ENCODE measurements at regions of chr20 and their contacts with region 1.

Region 1: GRCh38 chr20:49303065-49303552 is 25.3 kb upstream of the ZNFX1 start:
- DNase-seq: no peak
- ATAC-seq: no peak
- H3K4me3 ChIP-seq: no peak overlapping the region
- H3K27ac ChIP-seq: no peak overlapping the region
- H3K4me1 ChIP-seq: no peaks in the 10 kb centered on the region
- H3K27me3 ChIP-seq: no peaks in the 10 kb centered on the region
- CTCF ChIP-seq: no peak

Region 2: GRCh38 chr20:49228676-49229075 is 74.4 kb before region 1 on chr20:
- intact Hi-C with region 1: loop called in 1 of 2 experiments (anchors 2 kb)
- DNase-seq: no peak
- ATAC-seq: no peak
- H3K4me3 ChIP-seq: no peak overlapping the region
- H3K27ac ChIP-seq: no peak overlapping the region
- H3K4me1 ChIP-seq: no peaks in the 10 kb centered on the region
- H3K27me3 ChIP-seq: no peaks in the 10 kb centered on the region
- CTCF ChIP-seq: no peak

Measured in psoas muscle (tissue), 8 donors.